Left colon (tissue), 2 donors: ENCODE measurements at regions of chr5 and their contacts with region 1.

Region 1: DNA sequence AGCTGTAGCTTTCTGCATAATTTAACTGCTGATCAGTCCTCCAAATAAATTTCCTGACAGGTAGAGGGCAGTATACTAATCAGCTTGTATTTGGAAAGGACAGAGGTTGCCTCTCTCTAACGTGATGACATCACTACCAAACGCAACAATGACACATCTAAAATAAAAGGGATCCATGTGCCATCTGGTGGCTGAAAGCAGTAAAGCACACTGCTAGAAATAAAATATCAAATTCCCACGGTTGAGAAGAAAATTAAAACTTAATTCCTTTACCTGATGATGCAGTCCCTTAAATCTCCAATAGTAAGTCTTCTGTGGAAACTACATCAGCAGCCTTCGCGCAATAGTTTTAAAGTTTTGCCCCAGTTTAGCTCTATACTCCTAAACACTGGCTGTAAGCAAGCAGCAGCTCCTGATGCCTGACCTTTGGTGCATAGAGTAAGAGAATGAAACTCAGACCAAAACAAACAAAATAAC is 54.5 kb downstream of the DIAPH1 start:
- DNase-seq: peak; percentile 49 to 62
- ATAC-seq: peak; percentile 73

Region 2: GRCh38 chr5:141320225-141321169 is 243.8 kb before region 1 on chr5 and contains the start of gene TAF7:
- intact Hi-C with region 1: loop called in 1 of 2 experiments (anchors 10 kb)
- DNase-seq: peak; percentile 91 to 93
- ATAC-seq: peak; percentile 99
- total RNA-seq, gene TAF7: 52.3 to 66.1 TPM

Region 3: GRCh38 chr5:141412854-141413539 is 151.3 kb before region 1 on chr5 and contains the start of gene PCDHGA10:
- intact Hi-C with region 1: loop called in 1 of 2 experiments (anchors 10 kb)
- DNase-seq: peak in 1 of 2 donors; percentile 66
- ATAC-seq: peak; percentile 84
- total RNA-seq, gene PCDHGA10: 2.8 to 5.3 TPM